ENCODE measurements at regions of chr1 and their contacts with region 1.

Region 1: GRCh38 chr1:64343105-64343887 is 126.6 kb upstream of the CACHD1 start:
- DNase-seq: peak; percentile 64
- H3K4me3 Mint-ChIP-seq: no peak overlapping the region
- H3K27ac Mint-ChIP-seq: peak overlapping the region; percentile 52
- H3K4me1 Mint-ChIP-seq: peaks cover 25% of the 10 kb centered on the region
- H3K27me3 Mint-ChIP-seq: no peaks in the 10 kb centered on the region
- CTCF ChIP-seq: no peak

Region 2: GRCh38 chr1:64469977-64470664 is 126.8 kb after region 1 on chr1 and contains the start of gene CACHD1:
- CTCF ChIA-PET with region 1: no interaction called
- intact Hi-C with region 1: loop called (anchors 10 kb)
- DNase-seq: peak; percentile 77
- H3K4me3 Mint-ChIP-seq: peak within 1 kb of the TSS; percentile 86
- H3K27ac Mint-ChIP-seq: peak within 1 kb of the TSS; percentile 71
- H3K4me1 Mint-ChIP-seq: peaks cover 27% of the 10 kb centered on the region
- H3K27me3 Mint-ChIP-seq: peaks cover 52% of the 10 kb centered on the region
- CTCF ChIP-seq: no peak
- total RNA-seq, gene CACHD1: 2.5 and 3.5 TPM in 2 replicates

Region 3: GRCh38 chr1:64487061-64487460 is 143.8 kb after region 1 on chr1:
- CTCF ChIA-PET with region 1: no interaction called
- intact Hi-C with region 1: no loop called
- DNase-seq: no peak
- H3K4me3 Mint-ChIP-seq: no peak overlapping the region
- H3K27ac Mint-ChIP-seq: no peak overlapping the region
- H3K4me1 Mint-ChIP-seq: peaks cover 7% of the 10 kb centered on the region
- H3K27me3 Mint-ChIP-seq: no peaks in the 10 kb centered on the region
- CTCF ChIP-seq: peak; percentile 12

Region 4: GRCh38 chr1:64645741-64646140 is 302.4 kb after region 1 on chr1:
- CTCF ChIA-PET with region 1: no interaction called
- intact Hi-C with region 1: no loop called
- DNase-seq: no peak
- H3K4me3 Mint-ChIP-seq: no peak overlapping the region
- H3K27ac Mint-ChIP-seq: no peak overlapping the region
- H3K4me1 Mint-ChIP-seq: no peaks in the 10 kb centered on the region
- H3K27me3 Mint-ChIP-seq: no peaks in the 10 kb centered on the region
- CTCF ChIP-seq: no peak

Measured in Calu3 (cell line).